ENCODE measurements at regions of chr10 and their contacts with region 1.

Region 1: DNA sequence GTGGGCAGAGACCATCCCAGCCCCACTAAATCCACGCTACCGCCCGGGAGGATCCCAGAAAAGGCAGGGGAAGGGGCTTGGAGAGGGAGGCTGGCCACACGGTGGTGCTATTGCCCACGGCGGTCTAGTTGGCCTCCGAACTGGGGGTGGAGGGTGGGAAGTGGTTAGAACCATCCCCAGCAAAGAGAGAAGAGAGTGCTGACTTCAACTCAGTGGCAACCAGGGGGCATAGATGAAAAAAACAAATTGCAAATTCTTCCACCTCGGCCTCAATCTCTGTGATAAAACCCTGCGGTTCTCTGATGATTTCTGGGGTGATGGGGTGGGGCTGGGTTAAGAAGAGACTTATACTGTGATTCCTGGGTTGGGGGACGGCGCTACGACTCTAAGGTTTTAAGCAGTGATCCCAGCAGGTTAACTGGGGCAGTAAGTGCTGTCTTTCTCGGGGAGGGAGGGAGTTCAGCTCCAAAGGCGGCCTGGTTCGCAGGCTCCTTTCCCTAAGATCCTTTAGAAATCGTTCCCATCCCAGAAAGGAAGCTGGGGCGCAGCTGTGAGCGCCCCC is 154.5 kb upstream of the LYZL2 start:
- DNase-seq: peak; percentile 80 to 83 (median 82)
- H3K4me3 ChIP-seq: peak overlapping the region; percentile 30 to 53
- H3K4me3 Mint-ChIP-seq: peak overlapping the region; percentile 74 to 92 (median 86)
- H3K27ac ChIP-seq: peak overlapping the region; percentile 12
- H3K27ac Mint-ChIP-seq: peak overlapping the region; percentile 28 to 95 (median 83)
- H3K4me1 ChIP-seq: peaks cover 28% of the 10 kb centered on the region
- H3K4me1 Mint-ChIP-seq: peaks cover 7 to 33% (median 20%) of the 10 kb centered on the region in 4 donors
- H3K27me3 ChIP-seq: no peaks in the 10 kb centered on the region
- H3K27me3 Mint-ChIP-seq: no peaks in the 10 kb centered on the region

Region 2: GRCh38 chr10:30742471-30742870 is 41.5 kb before region 1 on chr10:
- CTCF ChIA-PET with region 1: no interaction called
- POLR2A ChIA-PET with region 1: no interaction called
- intact Hi-C with region 1: no loop called
- DNase-seq: no peak
- H3K4me3 ChIP-seq: no peak overlapping the region
- H3K4me3 Mint-ChIP-seq: no peak overlapping the region
- H3K27ac ChIP-seq: no peak overlapping the region
- H3K27ac Mint-ChIP-seq: no peak overlapping the region
- H3K4me1 ChIP-seq: no peaks in the 10 kb centered on the region
- H3K4me1 Mint-ChIP-seq: peaks cover 0 to 5% (median 1%) of the 10 kb centered on the region in 4 donors
- H3K27me3 ChIP-seq: no peaks in the 10 kb centered on the region
- H3K27me3 Mint-ChIP-seq: peaks cover 4% of the 10 kb centered on the region in 2 donors

Region 3: GRCh38 chr10:30812018-30812851 is 28.2 kb after region 1 on chr10:
- CTCF ChIA-PET with region 1: interaction called, 32 read pairs
- POLR2A ChIA-PET with region 1: interaction called, 15 read pairs
- intact Hi-C with region 1: no loop called
- DNase-seq: no peak
- H3K4me3 ChIP-seq: no peak overlapping the region
- H3K4me3 Mint-ChIP-seq: peak overlapping the region; percentile 18 to 71 (median 50)
- H3K27ac ChIP-seq: no peak overlapping the region
- H3K27ac Mint-ChIP-seq: peak overlapping the region in 5 of 7 donors; percentile 50 to 85 (median 70)
- H3K4me1 ChIP-seq: peaks cover 17% of the 10 kb centered on the region
- H3K4me1 Mint-ChIP-seq: peaks cover 6 to 23% (median 19%) of the 10 kb centered on the region in 4 donors
- H3K27me3 ChIP-seq: no peaks in the 10 kb centered on the region
- H3K27me3 Mint-ChIP-seq: no peaks in the 10 kb centered on the region

Region 4: GRCh38 chr10:30873411-30873810 is 89.4 kb after region 1 on chr10:
- CTCF ChIA-PET with region 1: interaction called, 3 read pairs
- POLR2A ChIA-PET with region 1: no interaction called
- intact Hi-C with region 1: loop called (anchors 1 kb)
- DNase-seq: no peak
- H3K4me3 ChIP-seq: no peak overlapping the region
- H3K4me3 Mint-ChIP-seq: no peak overlapping the region
- H3K27ac ChIP-seq: no peak overlapping the region
- H3K27ac Mint-ChIP-seq: no peak overlapping the region
- H3K4me1 ChIP-seq: no peaks in the 10 kb centered on the region
- H3K4me1 Mint-ChIP-seq: no peaks in the 10 kb centered on the region
- H3K27me3 ChIP-seq: no peaks in the 10 kb centered on the region
- H3K27me3 Mint-ChIP-seq: no peaks in the 10 kb centered on the region

Region 5: GRCh38 chr10:31083765-31084184 is 299.8 kb after region 1 on chr10:
- CTCF ChIA-PET with region 1: interaction called, 44 read pairs
- POLR2A ChIA-PET with region 1: interaction called, 6 read pairs
- intact Hi-C with region 1: no loop called
- DNase-seq: peak; percentile 40 to 59 (median 50)
- H3K4me3 ChIP-seq: no peak overlapping the region
- H3K4me3 Mint-ChIP-seq: no peak overlapping the region
- H3K27ac ChIP-seq: no peak overlapping the region
- H3K27ac Mint-ChIP-seq: no peak overlapping the region
- H3K4me1 ChIP-seq: no peaks in the 10 kb centered on the region
- H3K4me1 Mint-ChIP-seq: peaks cover 0 to 1% (median under 1%) of the 10 kb centered on the region in 4 donors
- H3K27me3 ChIP-seq: no peaks in the 10 kb centered on the region
- H3K27me3 Mint-ChIP-seq: no peaks in the 10 kb centered on the region

Region 6: GRCh38 chr10:31490858-31491504 is 707.0 kb after region 1 on chr10:
- CTCF ChIA-PET with region 1: interaction called, 28 read pairs
- POLR2A ChIA-PET with region 1: interaction called, 9 read pairs
- intact Hi-C with region 1: loop called (anchors 1 kb)
- DNase-seq: peak in 4 of 5 donors; percentile 23 to 39 (median 30)
- H3K4me3 ChIP-seq: no peak overlapping the region
- H3K4me3 Mint-ChIP-seq: no peak overlapping the region
- H3K27ac ChIP-seq: no peak overlapping the region
- H3K27ac Mint-ChIP-seq: no peak overlapping the region
- H3K4me1 ChIP-seq: no peaks in the 10 kb centered on the region
- H3K4me1 Mint-ChIP-seq: peaks cover 0 to 5% (median 2%) of the 10 kb centered on the region in 4 donors
- H3K27me3 ChIP-seq: no peaks in the 10 kb centered on the region
- H3K27me3 Mint-ChIP-seq: no peaks in the 10 kb centered on the region

Region 7: DNA sequence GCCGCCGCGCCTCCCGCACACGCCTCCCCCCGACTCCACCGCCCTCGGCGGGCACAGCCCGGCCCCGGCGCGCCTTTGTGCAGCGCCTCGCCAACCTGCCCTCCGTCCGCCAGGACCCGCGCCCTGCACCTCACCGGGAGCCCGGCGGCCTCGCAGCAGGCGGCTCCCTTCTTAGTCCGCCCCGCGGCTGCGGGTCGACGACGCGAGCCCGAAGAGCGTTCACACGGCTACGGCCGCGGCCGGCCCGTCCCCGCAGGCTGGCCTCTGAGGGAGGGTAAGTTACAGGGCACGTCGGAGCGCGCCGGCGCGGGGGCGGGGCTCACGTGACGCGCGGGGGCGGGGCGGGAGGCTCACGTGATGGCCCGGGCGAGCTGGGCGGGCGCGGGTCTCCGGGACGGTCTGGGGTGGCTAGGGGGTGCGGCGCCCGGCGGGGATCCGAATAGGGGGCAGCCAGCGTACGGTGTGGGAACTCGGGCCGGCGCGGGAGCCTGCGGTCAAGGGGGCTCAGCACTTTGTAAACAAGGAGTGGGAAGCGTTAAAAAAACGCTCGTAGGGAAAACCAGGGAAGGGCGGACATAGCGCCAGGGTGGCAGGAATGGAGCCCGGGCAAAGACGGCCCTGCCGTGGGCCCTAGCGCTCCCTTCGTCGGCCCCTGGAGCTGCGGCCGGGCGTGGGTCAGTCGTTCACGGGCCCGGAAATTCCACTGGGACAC is 1144.7 kb after region 1 on chr10 and contains the start of gene ARHGAP12:
- CTCF ChIA-PET with region 1: no interaction called
- POLR2A ChIA-PET with region 1: no interaction called
- intact Hi-C with region 1: loop called (anchors 2 kb)
- DNase-seq: peak; percentile 84 to 88 (median 85)
- H3K4me3 ChIP-seq: peak within 1 kb of the TSS; percentile 86 to 91
- H3K4me3 Mint-ChIP-seq: peak within 1 kb of the TSS; percentile 93 to 95 (median 93)
- H3K27ac ChIP-seq: peak within 1 kb of the TSS; percentile 66
- H3K27ac Mint-ChIP-seq: peak within 1 kb of the TSS; percentile 66 to 97 (median 93)
- H3K4me1 ChIP-seq: peaks cover 54% of the 10 kb centered on the region
- H3K4me1 Mint-ChIP-seq: peaks cover 36 to 51% (median 44%) of the 10 kb centered on the region in 4 donors
- H3K27me3 ChIP-seq: no peaks in the 10 kb centered on the region
- H3K27me3 Mint-ChIP-seq: no peaks in the 10 kb centered on the region
- total RNA-seq, gene ARHGAP12: 30.1 to 31.2 TPM